IMR-90 (cell line): ENCODE measurements at regions of chr9 and their contacts with region 1.

Region 1: GRCh38 chr9:131370638-131371037 is 23.2 kb upstream of the PRRC2B start:
- DNase-seq: no peak
- ATAC-seq: no peak
- H3K4me3 ChIP-seq: no peak overlapping the region
- H3K27ac ChIP-seq: no peak overlapping the region
- H3K4me1 ChIP-seq: peaks cover 7% of the 10 kb centered on the region
- H3K27me3 ChIP-seq: no peaks in the 10 kb centered on the region
- CTCF ChIP-seq: no peak
- POLR2A ChIP-seq: no peak
- RAD21 ChIP-seq: no peak

Region 2: DNA sequence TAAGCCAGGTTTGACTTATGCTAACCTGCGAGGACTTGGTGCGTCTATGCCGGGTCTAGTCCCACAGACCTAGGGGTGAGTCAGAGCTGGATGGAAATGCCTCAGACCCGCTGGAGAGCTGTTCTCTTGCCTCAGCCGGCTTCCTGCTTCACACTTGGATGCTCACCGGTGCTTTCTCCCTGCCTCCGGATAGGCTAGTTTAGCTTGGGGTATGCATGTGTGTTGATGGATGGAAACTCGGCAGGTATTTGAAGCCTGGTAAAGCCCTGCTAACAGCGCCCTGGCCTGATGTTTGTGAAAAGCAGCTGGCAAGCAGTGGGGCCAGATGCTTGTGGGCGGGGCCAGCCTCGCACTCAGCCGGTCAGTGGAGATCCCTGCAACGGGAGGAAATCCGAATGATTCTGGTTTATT is 52.5 kb after region 1 on chr9:
- CTCF ChIA-PET with region 1: no interaction called
- POLR2A ChIA-PET with region 1: no interaction called
- dilution Hi-C with region 1: no loop called
- in situ Hi-C with region 1: no loop called
- intact Hi-C with region 1: no loop called
- DNase-seq: peak; percentile 91
- ATAC-seq: peak; percentile 77
- H3K4me3 ChIP-seq: no peak overlapping the region
- H3K27ac ChIP-seq: no peak overlapping the region; the same call in 1 of the 2 replicates
- H3K4me1 ChIP-seq: peaks cover 39% of the 10 kb centered on the region
- H3K27me3 ChIP-seq: no peaks in the 10 kb centered on the region
- CTCF ChIP-seq: no peak
- POLR2A ChIP-seq: no peak
- RAD21 ChIP-seq: no peak

Region 3: DNA sequence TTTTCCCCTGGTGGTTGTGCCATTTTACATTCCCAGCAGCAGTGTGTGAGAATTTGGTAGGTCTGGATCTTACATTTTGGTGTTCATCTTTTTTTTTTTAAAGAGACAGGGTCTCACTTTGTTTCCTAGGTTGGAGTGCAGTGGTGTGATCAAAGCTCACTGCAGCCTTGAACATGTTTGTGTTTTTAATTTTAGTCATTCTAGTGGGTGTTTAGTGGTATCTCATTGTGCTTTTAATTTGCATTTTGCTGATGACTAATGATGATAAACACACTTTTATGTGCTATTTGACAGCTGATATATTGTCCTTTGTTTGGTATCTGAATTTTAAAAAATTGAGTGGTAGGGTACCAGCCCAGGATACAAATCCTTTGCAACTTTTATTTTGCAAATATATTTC is 78.6 kb after region 1 on chr9:
- CTCF ChIA-PET with region 1: no interaction called
- POLR2A ChIA-PET with region 1: interaction called, 12 read pairs
- dilution Hi-C with region 1: no loop called
- in situ Hi-C with region 1: no loop called
- intact Hi-C with region 1: no loop called
- DNase-seq: no peak
- ATAC-seq: no peak
- H3K4me3 ChIP-seq: no peak overlapping the region
- H3K27ac ChIP-seq: no peak overlapping the region
- H3K4me1 ChIP-seq: no peaks in the 10 kb centered on the region
- H3K27me3 ChIP-seq: no peaks in the 10 kb centered on the region
- CTCF ChIP-seq: no peak
- POLR2A ChIP-seq: no peak
- RAD21 ChIP-seq: no peak